ENCODE measurements at regions of chr2 and their contacts with region 1.

Region 1: DNA sequence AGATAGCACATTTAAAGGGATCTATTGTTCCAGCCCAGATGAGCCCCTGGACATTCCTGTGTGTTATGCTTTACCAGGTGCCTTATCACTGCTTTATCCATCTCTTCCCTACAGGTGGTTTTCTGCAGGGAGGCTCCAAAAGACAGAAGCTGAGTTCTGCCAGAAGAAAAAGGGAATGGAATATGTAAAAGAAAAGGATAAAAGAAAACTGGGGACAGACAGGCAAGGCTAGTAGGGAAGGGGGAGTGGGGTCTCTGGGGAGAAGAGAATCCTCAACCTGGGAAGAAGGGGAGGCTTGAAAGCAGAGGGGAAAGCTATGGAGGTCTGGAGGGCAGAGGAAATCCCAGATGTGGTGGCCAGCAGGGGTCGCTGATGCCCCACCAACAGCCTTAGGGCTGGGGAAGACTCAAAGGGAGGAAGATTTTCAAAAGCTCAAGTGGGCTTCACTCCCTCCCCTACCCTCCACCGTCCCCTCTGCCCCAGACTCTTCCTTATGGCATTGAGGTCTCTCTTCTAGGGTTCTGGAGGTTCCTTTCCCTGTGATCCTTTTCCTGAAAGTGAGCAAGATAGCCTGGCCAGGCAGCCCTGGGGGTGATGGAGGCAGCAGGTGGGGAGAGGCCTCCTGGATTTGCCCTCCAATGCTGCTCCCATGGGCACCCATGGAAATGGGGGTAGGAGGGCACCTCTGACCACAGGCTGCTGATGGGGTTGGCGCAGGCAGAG is 178.1 kb upstream of the PKDCC start:
- DNase-seq: peak; percentile 51
- H3K4me3 ChIP-seq: no peak overlapping the region
- H3K27ac ChIP-seq: no peak overlapping the region
- H3K27me3 ChIP-seq: no peaks in the 10 kb centered on the region
- CTCF ChIP-seq: peak; percentile 85

Region 2: GRCh38 chr2:41464395-41464794 is 405.3 kb before region 1 on chr2:
- in situ Hi-C with region 1: no loop called
- DNase-seq: no peak
- H3K4me3 ChIP-seq: no peak overlapping the region
- H3K27ac ChIP-seq: no peak overlapping the region
- H3K27me3 ChIP-seq: no peaks in the 10 kb centered on the region
- CTCF ChIP-seq: no peak

Region 3: GRCh38 chr2:41610501-41611190 is 259.1 kb before region 1 on chr2:
- in situ Hi-C with region 1: no loop called
- DNase-seq: peak; percentile 60
- H3K4me3 ChIP-seq: no peak overlapping the region
- H3K27ac ChIP-seq: peak overlapping the region; percentile 58
- H3K27me3 ChIP-seq: no peaks in the 10 kb centered on the region
- CTCF ChIP-seq: no peak

Region 4: GRCh38 chr2:42086500-42086953 is 216.8 kb after region 1 on chr2:
- in situ Hi-C with region 1: loop called (anchors 25 kb)
- DNase-seq: peak; percentile 62
- H3K4me3 ChIP-seq: no peak overlapping the region
- H3K27ac ChIP-seq: no peak overlapping the region
- H3K27me3 ChIP-seq: no peaks in the 10 kb centered on the region
- CTCF ChIP-seq: peak; percentile 70

Region 5: GRCh38 chr2:42267530-42267929 is 397.8 kb after region 1 on chr2:
- in situ Hi-C with region 1: no loop called
- DNase-seq: no peak
- H3K4me3 ChIP-seq: no peak overlapping the region
- H3K27ac ChIP-seq: no peak overlapping the region
- H3K27me3 ChIP-seq: no peaks in the 10 kb centered on the region
- CTCF ChIP-seq: no peak

Region 6: DNA sequence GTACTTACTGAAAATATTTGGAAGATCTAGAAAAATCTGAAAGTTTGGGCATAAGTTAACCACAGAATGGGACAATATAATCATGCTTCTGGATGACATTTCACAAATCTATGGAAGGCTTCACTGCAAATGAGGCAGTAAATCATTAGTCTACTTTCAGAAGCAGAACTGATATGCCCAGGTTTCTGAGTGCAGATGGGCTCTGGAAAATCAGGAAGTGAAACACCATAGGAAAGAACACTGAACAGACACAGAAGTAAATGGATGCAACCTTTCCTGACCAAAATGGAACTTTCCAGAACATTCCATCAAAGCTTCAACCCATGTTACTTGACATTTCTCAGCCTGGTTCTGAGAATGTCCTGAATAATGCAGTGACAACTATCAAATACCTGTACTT is 569.0 kb after region 1 on chr2:
- in situ Hi-C with region 1: no loop called
- DNase-seq: no peak
- H3K4me3 ChIP-seq: no peak overlapping the region
- H3K27ac ChIP-seq: no peak overlapping the region
- H3K27me3 ChIP-seq: no peaks in the 10 kb centered on the region
- CTCF ChIP-seq: no peak

Measured in brain microvascular endothelial cell (primary cell).